ENCODE measurements at regions of chr14 and their contacts with region 1.

Region 1: GRCh38 chr14:22386924-22387775 is 201.9 kb downstream of the DAD1 start:
- DNase-seq: peak; percentile 91
- ATAC-seq: peak; percentile 34
- H3K4me3 ChIP-seq: no peak overlapping the region
- H3K4me3 Mint-ChIP-seq: peak overlapping the region; percentile 69
- H3K27ac ChIP-seq: no peak overlapping the region
- H3K27ac Mint-ChIP-seq: peak overlapping the region; percentile 12
- H3K4me1 ChIP-seq: peaks cover 38 to 49% of the 10 kb centered on the region in 2 donors
- H3K4me1 Mint-ChIP-seq: peaks cover 82% of the 10 kb centered on the region
- H3K27me3 ChIP-seq: no peaks in the 10 kb centered on the region
- H3K27me3 Mint-ChIP-seq: no peaks in the 10 kb centered on the region
- CTCF ChIP-seq: peak; percentile 83

Region 2: DNA sequence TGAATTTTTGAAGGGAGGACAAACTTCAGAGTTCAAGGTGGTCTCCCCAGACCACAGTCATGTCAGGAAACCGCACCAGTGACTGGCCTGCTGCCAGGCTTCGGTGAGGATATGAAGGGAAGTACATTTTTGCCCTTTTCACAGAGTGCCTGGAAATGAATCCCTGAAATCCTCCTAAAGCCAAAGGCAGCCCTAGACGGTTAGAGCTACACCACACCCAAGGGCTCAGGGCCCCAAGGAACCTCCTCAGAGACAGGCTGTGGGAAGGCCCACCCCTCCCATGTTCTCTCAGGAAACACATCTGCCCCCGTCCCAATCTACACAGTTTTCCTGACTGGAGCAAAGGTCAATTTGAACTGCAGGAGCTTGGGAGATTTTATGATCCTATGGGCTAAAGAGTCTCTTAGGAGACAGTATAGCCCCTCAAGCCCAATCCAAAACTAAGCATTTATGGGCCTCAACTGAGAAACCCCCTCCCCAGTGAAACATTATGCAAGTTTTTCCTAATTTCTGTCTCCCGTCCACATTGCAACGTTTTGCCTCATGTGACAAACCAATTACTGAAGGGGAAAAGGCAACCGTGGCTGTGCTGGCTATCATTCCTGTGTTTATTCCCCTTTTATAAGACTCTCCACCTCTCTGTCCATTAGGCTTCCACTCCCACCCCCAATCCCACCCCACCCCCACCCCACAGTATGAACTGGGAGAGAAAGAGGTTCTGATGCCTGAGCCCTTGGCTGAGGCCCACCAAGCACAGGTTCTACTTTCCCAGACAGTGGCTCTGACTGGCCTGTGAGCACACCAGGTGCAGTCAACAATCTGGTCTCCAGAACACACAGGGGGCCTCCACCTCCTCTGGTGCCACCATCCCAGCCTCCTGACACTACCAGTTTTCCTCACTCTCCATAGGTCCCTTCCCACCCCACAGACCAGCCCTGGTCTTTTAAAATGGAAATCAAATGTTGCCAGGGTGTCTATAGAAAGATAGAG is 1574.9 kb before region 1 on chr14:
- CTCF ChIA-PET with region 1: no interaction called
- POLR2A ChIA-PET with region 1: no interaction called
- intact Hi-C with region 1: no loop called
- DNase-seq: no peak
- ATAC-seq: no peak
- H3K4me3 ChIP-seq: no peak overlapping the region
- H3K4me3 Mint-ChIP-seq: no peak overlapping the region
- H3K27ac ChIP-seq: no peak overlapping the region
- H3K27ac Mint-ChIP-seq: no peak overlapping the region
- H3K4me1 ChIP-seq: peaks cover 18 to 19% of the 10 kb centered on the region in 2 donors
- H3K4me1 Mint-ChIP-seq: peaks cover 19% of the 10 kb centered on the region
- H3K27me3 ChIP-seq: no peaks in the 10 kb centered on the region
- H3K27me3 Mint-ChIP-seq: peaks cover 4% of the 10 kb centered on the region
- CTCF ChIP-seq: no peak

Region 3: DNA sequence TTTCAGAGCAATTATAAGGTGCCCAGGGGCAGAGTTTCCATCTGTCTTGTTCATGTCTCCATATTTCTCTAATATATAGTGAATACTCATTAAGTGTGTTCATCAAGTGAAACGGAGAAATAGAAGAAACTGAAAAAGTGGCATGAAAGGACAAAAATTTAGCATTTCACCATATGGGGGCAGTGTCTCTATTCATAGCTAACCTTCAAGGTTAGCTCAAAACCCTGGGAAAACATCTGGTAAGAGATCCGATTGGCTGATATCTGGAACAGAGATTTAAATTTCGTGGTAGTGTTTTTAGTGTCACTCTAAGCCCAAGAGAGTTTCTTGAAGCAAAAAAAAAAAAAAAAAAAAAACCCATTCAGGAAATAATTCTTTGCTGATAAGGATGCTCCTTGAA is 165.6 kb before region 1 on chr14:
- CTCF ChIA-PET with region 1: interaction called, 10 read pairs
- POLR2A ChIA-PET with region 1: no interaction called
- intact Hi-C with region 1: no loop called
- DNase-seq: peak; percentile 48
- ATAC-seq: no peak
- H3K4me3 ChIP-seq: no peak overlapping the region
- H3K4me3 Mint-ChIP-seq: no peak overlapping the region
- H3K27ac ChIP-seq: no peak overlapping the region
- H3K27ac Mint-ChIP-seq: no peak overlapping the region
- H3K4me1 ChIP-seq: peaks cover 13 to 15% of the 10 kb centered on the region in 2 donors
- H3K4me1 Mint-ChIP-seq: peaks cover 25% of the 10 kb centered on the region
- H3K27me3 ChIP-seq: peaks cover 0 to 12% (median 7%) of the 10 kb centered on the region in 4 experiments
- H3K27me3 Mint-ChIP-seq: peaks cover 24% of the 10 kb centered on the region
- CTCF ChIP-seq: peak; percentile 66

Region 4: DNA sequence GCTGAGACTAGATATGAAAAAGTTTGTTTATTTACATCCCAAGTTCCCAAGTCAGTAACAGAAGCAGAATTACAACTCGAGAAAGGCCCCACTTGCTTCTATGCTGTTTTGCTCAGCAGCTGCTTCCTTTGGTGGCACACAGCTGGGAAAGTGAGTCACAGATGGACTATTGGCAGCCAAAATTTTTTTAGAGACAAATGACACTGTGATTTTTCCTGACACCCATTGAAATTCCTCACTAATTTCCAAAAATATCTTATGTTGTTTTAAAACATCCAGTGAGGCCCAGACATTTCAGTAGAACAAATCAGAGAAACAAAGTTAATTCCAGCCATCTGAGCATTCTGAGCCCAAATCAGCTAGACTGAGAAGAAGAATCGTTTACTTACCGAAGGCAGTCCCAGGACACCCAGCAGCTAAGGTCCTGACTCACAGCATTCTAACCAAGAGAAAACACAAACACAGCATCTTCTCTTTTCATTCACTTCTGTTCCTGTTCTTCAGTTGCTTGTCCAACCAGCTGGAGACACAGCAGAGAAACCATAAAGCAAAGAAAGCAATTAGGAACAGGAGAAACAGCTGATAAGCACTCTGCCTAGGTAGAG is 13.6 kb after region 1 on chr14:
- CTCF ChIA-PET with region 1: interaction called, 26 read pairs
- POLR2A ChIA-PET with region 1: no interaction called
- intact Hi-C with region 1: no loop called
- DNase-seq: no peak
- ATAC-seq: no peak
- H3K4me3 ChIP-seq: no peak overlapping the region
- H3K4me3 Mint-ChIP-seq: no peak overlapping the region
- H3K27ac ChIP-seq: no peak overlapping the region
- H3K27ac Mint-ChIP-seq: no peak overlapping the region
- H3K4me1 ChIP-seq: peaks cover 7 to 9% of the 10 kb centered on the region in 2 donors
- H3K4me1 Mint-ChIP-seq: peaks cover 10% of the 10 kb centered on the region
- H3K27me3 ChIP-seq: no peaks in the 10 kb centered on the region
- H3K27me3 Mint-ChIP-seq: peaks cover 6% of the 10 kb centered on the region
- CTCF ChIP-seq: no peak

Region 5: GRCh38 chr14:22460461-22461195 is 73.5 kb after region 1 on chr14:
- CTCF ChIA-PET with region 1: interaction called, 30 read pairs
- POLR2A ChIA-PET with region 1: interaction called, 5 read pairs
- intact Hi-C with region 1: no loop called
- DNase-seq: no peak
- ATAC-seq: no peak
- H3K4me3 ChIP-seq: no peak overlapping the region
- H3K4me3 Mint-ChIP-seq: no peak overlapping the region
- H3K27ac ChIP-seq: no peak overlapping the region
- H3K27ac Mint-ChIP-seq: no peak overlapping the region
- H3K4me1 ChIP-seq: peaks cover 16 to 21% of the 10 kb centered on the region in 2 donors
- H3K4me1 Mint-ChIP-seq: peaks cover 28% of the 10 kb centered on the region
- H3K27me3 ChIP-seq: no peaks in the 10 kb centered on the region
- H3K27me3 Mint-ChIP-seq: no peaks in the 10 kb centered on the region
- CTCF ChIP-seq: no peak

Region 6: GRCh38 chr14:22483863-22484593 is 96.9 kb after region 1 on chr14:
- CTCF ChIA-PET with region 1: interaction called, 161 read pairs
- POLR2A ChIA-PET with region 1: interaction called, 3 read pairs
- intact Hi-C with region 1: no loop called
- DNase-seq: no peak
- ATAC-seq: peak; percentile 29
- H3K4me3 ChIP-seq: peak overlapping the region in 1 of 5 experiments; percentile 15
- H3K4me3 Mint-ChIP-seq: peak overlapping the region; percentile 81
- H3K27ac ChIP-seq: peak overlapping the region; percentile 8 to 26
- H3K27ac Mint-ChIP-seq: peak overlapping the region; percentile 91
- H3K4me1 ChIP-seq: peaks cover 59 to 79% of the 10 kb centered on the region in 2 donors
- H3K4me1 Mint-ChIP-seq: peaks cover 91% of the 10 kb centered on the region
- H3K27me3 ChIP-seq: no peaks in the 10 kb centered on the region
- H3K27me3 Mint-ChIP-seq: no peaks in the 10 kb centered on the region
- CTCF ChIP-seq: no peak

Region 7: GRCh38 chr14:22986508-22987054 is 599.4 kb after region 1 on chr14:
- CTCF ChIA-PET with region 1: interaction called, 7 read pairs
- POLR2A ChIA-PET with region 1: no interaction called
- intact Hi-C with region 1: loop called (anchors 2 kb)
- DNase-seq: peak; percentile 88
- ATAC-seq: peak; percentile 63
- H3K4me3 ChIP-seq: no peak overlapping the region
- H3K4me3 Mint-ChIP-seq: no peak overlapping the region
- H3K27ac ChIP-seq: no peak overlapping the region
- H3K27ac Mint-ChIP-seq: no peak overlapping the region
- H3K4me1 ChIP-seq: peaks cover 13 to 18% of the 10 kb centered on the region in 2 donors
- H3K4me1 Mint-ChIP-seq: no peaks in the 10 kb centered on the region
- H3K27me3 ChIP-seq: peaks cover 0 to 11% (median 4%) of the 10 kb centered on the region in 4 experiments
- H3K27me3 Mint-ChIP-seq: no peaks in the 10 kb centered on the region
- CTCF ChIP-seq: peak; percentile 89

Region 8: DNA sequence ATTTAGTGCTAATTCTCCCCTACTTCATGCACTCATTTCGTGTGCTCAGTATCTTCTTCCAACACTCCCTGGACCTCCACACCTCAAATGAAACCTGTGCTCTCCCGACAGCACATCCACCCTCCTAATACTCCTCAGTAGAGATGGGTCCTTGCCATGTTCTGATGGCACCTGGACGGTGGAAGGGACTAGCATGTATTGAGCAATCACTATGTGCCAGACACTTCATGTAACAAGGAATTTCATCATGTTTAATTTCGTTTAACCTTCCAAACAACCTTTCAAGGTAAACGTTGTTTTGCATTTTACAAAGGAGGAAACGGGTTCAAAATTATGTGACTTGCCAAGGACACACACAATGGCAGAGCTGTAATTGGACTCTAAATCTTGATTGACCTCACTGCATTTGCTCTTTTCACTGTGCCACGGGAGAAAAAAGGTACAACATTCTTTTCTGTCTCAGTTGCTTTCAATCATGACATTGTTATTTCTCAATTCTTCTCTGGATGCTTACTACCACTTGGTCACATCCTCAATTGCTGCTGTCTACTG is 808.5 kb after region 1 on chr14:
- CTCF ChIA-PET with region 1: no interaction called
- POLR2A ChIA-PET with region 1: no interaction called
- intact Hi-C with region 1: no loop called
- DNase-seq: no peak
- ATAC-seq: no peak
- H3K4me3 ChIP-seq: no peak overlapping the region
- H3K4me3 Mint-ChIP-seq: no peak overlapping the region
- H3K27ac ChIP-seq: no peak overlapping the region
- H3K27ac Mint-ChIP-seq: no peak overlapping the region
- H3K4me1 ChIP-seq: no peaks in the 10 kb centered on the region
- H3K4me1 Mint-ChIP-seq: no peaks in the 10 kb centered on the region
- H3K27me3 ChIP-seq: no peaks in the 10 kb centered on the region
- H3K27me3 Mint-ChIP-seq: peaks cover 9% of the 10 kb centered on the region
- CTCF ChIP-seq: no peak

Measured in B cell (primary cell).